CD4-positive, alpha-beta memory T cell (primary cell): ENCODE measurements at regions of chr1 and their contacts with region 1.

Region 1: DNA sequence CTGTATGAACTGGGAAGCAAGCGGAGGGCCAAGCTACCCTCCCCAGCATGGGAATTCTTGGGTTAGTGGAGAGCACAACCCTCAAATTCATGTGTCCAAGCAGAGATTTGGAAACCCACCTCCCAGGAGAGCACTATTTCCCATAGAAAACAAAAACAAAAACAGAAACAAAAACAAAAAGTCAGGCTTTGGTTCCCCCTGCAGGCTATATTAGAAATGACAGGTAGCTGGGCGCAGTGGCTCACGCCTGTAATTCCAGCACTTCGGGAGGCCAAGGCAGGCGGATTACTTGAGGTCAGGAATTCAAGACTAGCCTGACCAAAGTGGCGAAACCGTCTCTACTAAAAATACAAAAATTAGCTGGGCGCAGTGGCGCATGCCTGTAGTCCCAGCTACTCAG is 10.8 kb downstream of the MINDY1 start:
- DNase-seq: peak in 3 of 5 donors; percentile 32 to 39 (median 38)
- H3K4me3 ChIP-seq: no peak overlapping the region
- H3K4me3 Mint-ChIP-seq: peak overlapping the region in 3 of 8 donors; percentile 10 to 57 (median 25)
- H3K27ac ChIP-seq: peak overlapping the region; percentile 10
- H3K27ac Mint-ChIP-seq: peak overlapping the region in 6 of 7 donors; percentile 70 to 89 (median 80)
- H3K4me1 ChIP-seq: peaks cover 12% of the 10 kb centered on the region
- H3K4me1 Mint-ChIP-seq: peaks cover 3 to 20% (median 13%) of the 10 kb centered on the region in 4 donors
- H3K27me3 ChIP-seq: no peaks in the 10 kb centered on the region
- H3K27me3 Mint-ChIP-seq: no peaks in the 10 kb centered on the region

Region 2: DNA sequence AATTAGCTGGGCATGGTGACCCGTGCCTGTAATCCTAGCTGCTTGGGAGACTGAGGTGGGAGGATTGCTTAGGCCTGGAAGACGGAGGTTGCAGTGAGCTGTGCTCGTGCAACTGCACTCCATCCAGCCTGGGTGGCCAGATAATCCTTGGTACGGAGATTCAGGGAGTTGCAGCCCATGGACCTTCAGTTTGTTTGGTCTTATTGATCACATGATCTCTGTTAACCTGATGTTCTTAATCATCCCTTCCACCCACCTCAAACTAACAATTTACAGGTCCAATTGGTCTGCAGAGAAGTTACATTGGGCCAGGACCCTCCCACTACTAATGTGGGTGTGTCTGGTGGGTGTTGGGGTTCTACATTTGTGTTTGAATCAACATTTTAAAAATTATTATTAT is 80.7 kb before region 1 on chr1:
- CTCF ChIA-PET with region 1: no interaction called
- POLR2A ChIA-PET with region 1: no interaction called
- intact Hi-C with region 1: no loop called
- DNase-seq: no peak
- H3K4me3 ChIP-seq: no peak overlapping the region
- H3K4me3 Mint-ChIP-seq: no peak overlapping the region
- H3K27ac ChIP-seq: no peak overlapping the region
- H3K27ac Mint-ChIP-seq: no peak overlapping the region
- H3K4me1 ChIP-seq: no peaks in the 10 kb centered on the region
- H3K4me1 Mint-ChIP-seq: no peaks in the 10 kb centered on the region
- H3K27me3 ChIP-seq: no peaks in the 10 kb centered on the region
- H3K27me3 Mint-ChIP-seq: no peaks in the 10 kb centered on the region

Region 3: DNA sequence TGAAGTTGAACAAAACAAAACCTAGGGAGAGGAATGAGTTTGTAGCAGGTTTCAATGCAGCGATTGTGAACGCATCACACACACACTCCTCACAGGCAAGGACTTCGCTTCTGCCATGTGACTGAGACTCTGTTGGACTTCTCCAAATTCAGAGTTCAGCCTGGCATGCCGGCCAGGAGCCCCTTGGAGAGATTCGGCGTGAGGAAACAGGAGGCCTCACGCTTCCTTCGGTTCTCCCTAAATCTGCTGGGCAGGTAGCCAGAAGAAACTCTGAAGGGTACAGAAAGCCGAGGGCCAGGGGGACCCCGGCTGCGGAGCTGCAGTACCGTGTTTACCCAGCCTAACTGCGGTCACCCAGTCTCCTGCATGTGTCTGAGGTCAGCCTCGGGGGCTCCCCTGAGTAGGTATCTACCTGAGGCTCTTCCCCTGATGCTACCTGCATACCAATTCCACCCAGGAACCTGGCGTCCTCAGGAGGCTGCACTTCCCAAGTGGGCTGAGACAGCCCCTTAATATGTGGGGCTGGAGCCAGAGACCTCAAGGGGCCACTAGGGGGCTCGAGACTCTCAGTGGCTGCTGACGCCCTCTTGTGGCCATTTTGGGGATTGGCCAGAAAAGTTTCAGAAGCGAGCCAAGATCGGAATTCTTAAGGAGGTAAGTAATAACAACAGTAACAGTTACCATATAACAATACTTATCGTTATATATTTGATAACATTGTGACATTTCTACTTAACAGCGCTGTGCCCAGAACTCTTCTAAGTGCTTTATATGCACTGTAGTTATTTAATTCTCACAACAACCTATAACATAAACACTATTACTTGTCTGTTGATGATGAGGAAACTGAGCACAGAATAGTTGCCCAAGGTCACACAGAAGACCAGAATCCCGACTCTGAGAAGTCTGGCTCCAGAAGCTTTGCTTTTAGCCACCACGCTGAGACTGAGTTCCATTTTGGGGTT is 16.5 kb before region 1 on chr1:
- CTCF ChIA-PET with region 1: interaction called, 255 read pairs
- POLR2A ChIA-PET with region 1: interaction called, 3 read pairs
- intact Hi-C with region 1: loop called (anchors 2 kb)
- DNase-seq: peak; percentile 83 to 87 (median 85)
- H3K4me3 ChIP-seq: peak overlapping the region in 1 of 2 donors; percentile 52
- H3K4me3 Mint-ChIP-seq: peak overlapping the region in 4 of 8 donors; percentile 29 to 59 (median 41)
- H3K27ac ChIP-seq: peak overlapping the region; percentile 11
- H3K27ac Mint-ChIP-seq: peak overlapping the region in 6 of 7 donors; percentile 48 to 83 (median 64)
- H3K4me1 ChIP-seq: peaks cover 39% of the 10 kb centered on the region
- H3K4me1 Mint-ChIP-seq: peaks cover 20 to 44% (median 31%) of the 10 kb centered on the region in 4 donors
- H3K27me3 ChIP-seq: no peaks in the 10 kb centered on the region
- H3K27me3 Mint-ChIP-seq: no peaks in the 10 kb centered on the region